Activated T-helper 1 cell treated with anti-CD3 and anti-CD28 coated beads, Interleukin-12 subunit alpha, Interleukin-12 subunit beta, Interleukin-2, Interleukin-4 antibody, amounts not matched to agents 30 ng/mL and 10 ng/mL and 1 ng/mL, durations not matched to agents 14 hours and 24 hours and 36 hours (primary cell): ENCODE measurements at regions of chr5 and their contacts with region 1.

Region 1: GRCh38 chr5:77518304-77518703 is 26.2 kb upstream of the WDR41 start:
- DNase-seq: no peak
- H3K4me3 Mint-ChIP-seq: no peak overlapping the region
- H3K27ac Mint-ChIP-seq: no peak overlapping the region
- H3K4me1 Mint-ChIP-seq: no peaks in the 10 kb centered on the region
- H3K27me3 Mint-ChIP-seq: peaks cover 11% of the 10 kb centered on the region

Region 2: DNA sequence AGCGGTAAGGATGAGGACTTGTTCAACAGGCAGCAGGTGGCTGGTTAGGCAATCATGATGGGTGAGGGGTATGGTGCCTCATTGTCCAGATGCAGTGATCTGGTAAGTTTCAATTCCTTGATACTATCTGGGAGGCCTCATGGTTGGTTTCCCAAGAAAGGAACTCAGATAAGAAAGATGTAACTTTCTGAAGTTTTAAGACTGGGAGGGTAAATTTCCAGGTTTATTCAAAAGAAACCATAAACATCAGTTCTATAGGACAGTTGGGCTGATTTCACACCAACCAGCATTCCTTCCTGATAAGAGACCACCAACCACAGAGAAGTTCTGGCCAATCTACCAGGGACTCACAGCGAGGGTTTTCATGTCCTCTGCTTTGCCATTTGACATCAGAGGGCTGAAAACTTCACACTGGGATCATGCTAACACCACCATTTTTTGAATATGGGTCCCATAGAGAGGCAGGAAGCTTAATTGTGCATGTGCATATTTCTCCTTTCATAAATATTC is 488.9 kb before region 1 on chr5:
- intact Hi-C with region 1: no loop called
- DNase-seq: no peak
- H3K4me3 Mint-ChIP-seq: peak overlapping the region; percentile 90
- H3K27ac Mint-ChIP-seq: peak overlapping the region; percentile 86
- H3K4me1 Mint-ChIP-seq: peaks cover 29% of the 10 kb centered on the region
- H3K27me3 Mint-ChIP-seq: peaks cover 4% of the 10 kb centered on the region

Region 3: DNA sequence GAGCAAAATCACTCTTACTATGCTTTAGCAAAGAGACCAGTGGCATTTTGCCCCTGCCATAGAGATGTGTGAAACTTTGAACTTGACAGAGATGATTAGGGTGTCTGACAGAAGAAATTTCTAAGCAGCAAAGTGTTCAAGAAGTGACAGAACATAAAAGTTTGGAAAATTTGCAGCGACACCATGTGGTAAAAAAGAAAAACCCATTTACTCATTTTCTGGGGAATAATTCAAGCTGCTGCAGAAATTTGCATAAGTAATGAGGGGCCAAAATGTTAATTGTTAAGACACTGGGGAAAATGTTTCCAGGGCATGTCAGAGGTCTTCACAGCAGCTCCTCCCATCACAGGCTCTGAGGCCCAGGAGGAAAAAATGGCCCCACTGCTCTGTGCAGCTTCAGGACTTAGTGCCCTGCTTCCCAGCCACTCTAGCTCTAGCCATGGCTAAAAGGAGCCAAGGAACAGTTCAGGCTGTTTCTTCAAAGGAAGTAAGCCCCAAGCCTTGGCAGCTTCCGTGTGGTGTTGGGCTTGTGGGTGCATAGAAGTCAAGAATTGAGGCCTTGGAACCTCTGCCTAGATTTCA is 782.3 kb after region 1 on chr5:
- intact Hi-C with region 1: loop called (anchors 5 kb)
- DNase-seq: no peak
- H3K4me3 Mint-ChIP-seq: no peak overlapping the region
- H3K27ac Mint-ChIP-seq: no peak overlapping the region
- H3K4me1 Mint-ChIP-seq: peaks cover 10% of the 10 kb centered on the region
- H3K27me3 Mint-ChIP-seq: peaks cover 28% of the 10 kb centered on the region